Heart left ventricle (tissue), 16 donors: ENCODE measurements at regions of chr18 and their contacts with region 1.

Region 1: GRCh38 chr18:50953822-50954221 is 14.0 kb upstream of the ELAC1 start:
- DNase-seq: no peak
- ATAC-seq: no peak
- H3K4me3 ChIP-seq: no peak overlapping the region
- H3K27ac ChIP-seq: no peak overlapping the region
- H3K4me1 ChIP-seq: no peaks in the 10 kb centered on the region
- H3K27me3 ChIP-seq: no peaks in the 10 kb centered on the region
- CTCF ChIP-seq: no peak
- POLR2A ChIP-seq: no peak

Region 2: GRCh38 chr18:50917021-50917420 is 36.8 kb before region 1 on chr18:
- intact Hi-C with region 1: loop called in 1 of 10 experiments (anchors 2 kb)
- DNase-seq: no peak
- ATAC-seq: no peak
- H3K4me3 ChIP-seq: no peak overlapping the region
- H3K27ac ChIP-seq: no peak overlapping the region
- H3K4me1 ChIP-seq: no peaks in the 10 kb centered on the region
- H3K27me3 ChIP-seq: no peaks in the 10 kb centered on the region
- CTCF ChIP-seq: no peak
- POLR2A ChIP-seq: no peak

Region 3: DNA sequence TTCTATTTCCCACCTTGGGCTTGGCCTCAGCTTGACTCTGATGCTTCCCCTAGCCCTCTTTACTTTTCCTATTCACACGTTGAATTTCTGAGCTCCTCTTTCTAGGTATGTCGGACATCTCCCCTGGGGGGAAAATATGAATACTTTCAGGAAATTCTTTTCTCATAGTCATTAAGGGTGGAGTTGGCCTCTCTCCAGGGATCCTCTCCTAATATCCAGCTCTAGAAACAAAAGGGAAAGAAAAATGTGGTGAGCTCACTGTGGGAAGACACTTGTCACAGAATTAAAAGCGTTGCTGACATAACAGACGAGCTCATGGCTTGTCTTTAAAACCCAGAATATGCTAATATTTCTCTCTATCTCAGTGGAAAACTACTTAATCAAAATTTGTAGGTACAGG is 376.3 kb after region 1 on chr18:
- intact Hi-C with region 1: no loop called
- DNase-seq: no peak
- ATAC-seq: peak in 1 of 4 donors; percentile 55
- H3K4me3 ChIP-seq: no peak overlapping the region
- H3K27ac ChIP-seq: no peak overlapping the region
- H3K4me1 ChIP-seq: peaks cover 0 to 7% (median 0%) of the 10 kb centered on the region in 12 donors
- H3K27me3 ChIP-seq: no peaks in the 10 kb centered on the region
- CTCF ChIP-seq: no peak
- POLR2A ChIP-seq: no peak